K562 (cell line): ENCODE measurements at regions of chr12 and their contacts with region 1.

Region 1: DNA sequence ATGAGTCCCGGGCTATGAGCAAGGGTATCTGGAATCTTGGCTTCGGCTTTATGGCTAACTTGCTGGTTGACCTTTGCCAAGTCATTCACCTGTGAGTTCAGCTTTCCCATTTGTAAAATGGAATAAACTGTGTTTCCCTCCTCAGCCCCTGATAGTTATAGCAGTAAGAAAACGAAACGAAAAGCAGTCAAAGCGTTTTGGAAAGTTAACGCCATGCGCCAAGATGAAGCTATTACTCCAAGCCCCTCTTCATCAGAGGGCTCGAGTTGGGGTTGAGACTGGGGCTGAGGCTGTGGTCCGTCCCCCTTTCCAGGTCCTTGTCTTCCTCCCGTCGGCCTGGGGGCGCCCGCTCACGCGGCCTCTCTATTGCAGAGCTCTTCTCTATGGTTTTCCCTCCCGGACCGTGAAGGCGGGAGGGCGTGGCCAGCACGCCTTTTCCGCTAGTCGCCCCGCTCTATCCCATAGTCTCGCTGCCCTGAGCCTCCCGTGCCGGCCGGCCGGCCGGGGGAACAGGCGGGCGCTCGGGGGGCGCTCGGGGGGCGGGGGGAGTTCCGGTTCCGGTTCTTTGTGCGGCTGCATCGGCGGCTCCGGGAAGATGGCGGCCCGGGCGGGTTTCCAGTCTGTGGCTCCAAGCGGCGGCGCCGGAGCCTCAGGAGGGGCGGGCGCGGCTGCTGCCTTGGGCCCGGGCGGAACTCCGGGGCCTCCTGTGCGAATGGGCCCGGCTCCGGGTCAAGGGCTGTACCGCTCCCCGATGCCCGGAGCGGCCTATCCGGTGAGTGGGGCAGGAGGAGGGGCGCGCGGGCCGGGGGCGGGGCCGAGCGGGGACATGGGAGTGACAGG is at the start of gene SMARCD1:
- DNase-seq: peak; percentile 92 to 96 (median 93)
- ATAC-seq: peak; percentile 96
- H3K4me3 ChIP-seq: peak within 1 kb of the TSS; percentile 82
- H3K27ac ChIP-seq: peak within 1 kb of the TSS; percentile 84
- H3K4me1 ChIP-seq: peaks cover 10 to 21% of the 10 kb centered on the region in 2 experiments; a peak in 4 of 5 replicates
- H3K27me3 ChIP-seq: no peaks in the 10 kb centered on the region
- CTCF ChIP-seq: peak; percentile 75 to 88 (median 86)
- EP300 ChIP-seq: peak; percentile 39; the same call in 1 of the 2 replicates
- POLR2A ChIP-seq: peak; percentile 60; the same call in 1 of the 2 replicates
- RAD21 ChIP-seq: peak in 1 of 2 experiments; percentile 20; a peak in 1 of 4 replicates
- polyA plus RNA-seq, gene SMARCD1: 0.86 to 1.5 TPM

Region 2: GRCh38 chr12:50097952-50098351 is 13.0 kb after region 1 on chr12:
- CTCF ChIA-PET with region 1: no interaction called
- POLR2A ChIA-PET with region 1: interaction called, 16 read pairs
- in situ Hi-C with region 1: no loop called
- intact Hi-C with region 1: no loop called
- DNase-seq: no peak
- ATAC-seq: no peak
- H3K4me3 ChIP-seq: no peak overlapping the region
- H3K27ac ChIP-seq: no peak overlapping the region
- H3K4me1 ChIP-seq: no peaks in the 10 kb centered on the region; a peak in 1 of 5 replicates
- H3K27me3 ChIP-seq: no peaks in the 10 kb centered on the region
- CTCF ChIP-seq: no peak
- EP300 ChIP-seq: no peak
- POLR2A ChIP-seq: no peak
- RAD21 ChIP-seq: no peak

Region 3: DNA sequence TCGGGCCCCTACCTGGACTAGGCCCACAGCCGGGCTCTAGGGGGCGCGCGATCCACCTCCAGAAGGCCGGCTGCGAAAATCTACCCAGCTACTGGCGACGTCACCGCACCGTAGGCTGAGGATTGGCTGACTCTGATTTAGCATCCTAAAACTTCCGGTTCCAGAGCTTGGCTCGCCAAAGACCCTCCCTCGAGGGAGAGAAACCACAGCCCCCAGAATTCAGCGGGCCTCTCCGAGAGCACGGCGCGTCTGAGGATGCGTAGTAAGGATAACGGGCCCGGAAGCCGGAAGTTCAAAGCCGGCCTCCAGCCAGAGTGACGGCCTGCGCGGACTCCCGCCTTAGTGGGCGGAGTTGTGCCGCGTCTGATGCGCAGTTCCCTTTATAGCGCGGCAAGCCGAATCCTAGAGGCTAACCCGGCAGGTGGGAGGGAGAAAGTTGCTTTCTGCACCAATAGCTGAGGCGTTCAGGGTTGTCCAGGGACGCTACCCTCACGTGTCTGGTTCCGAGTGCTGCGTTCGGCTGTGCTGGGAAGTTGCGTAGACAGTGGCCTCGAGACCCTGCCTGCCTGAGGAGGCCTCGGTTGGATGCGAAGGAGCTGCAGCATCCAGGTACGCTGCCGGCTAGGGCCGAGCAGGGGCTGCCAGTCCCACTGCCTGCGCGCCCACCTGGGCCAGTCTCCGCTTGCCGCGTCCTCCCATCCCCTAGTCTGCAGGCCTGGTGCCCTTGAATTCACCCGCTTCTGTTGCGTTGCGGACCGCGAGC is 26.9 kb after region 1 on chr12 and contains the start of gene COX14:
- CTCF ChIA-PET with region 1: interaction called, 4 read pairs
- POLR2A ChIA-PET with region 1: interaction called, 6 read pairs
- in situ Hi-C with region 1: no loop called
- intact Hi-C with region 1: loop called (anchors 1 kb)
- DNase-seq: peak; percentile 93 to 99 (median 96)
- ATAC-seq: peak; percentile 92
- H3K4me3 ChIP-seq: peak within 1 kb of the TSS; percentile 78
- H3K27ac ChIP-seq: peak within 1 kb of the TSS; percentile 87
- H3K4me1 ChIP-seq: peaks cover 29 to 48% of the 10 kb centered on the region in 2 experiments
- H3K27me3 ChIP-seq: no peaks in the 10 kb centered on the region
- CTCF ChIP-seq: peak; percentile 90 to 96 (median 95)
- EP300 ChIP-seq: no peak
- POLR2A ChIP-seq: peak; percentile 90
- RAD21 ChIP-seq: peak in 1 of 2 experiments; percentile 52; a peak in 2 of 4 replicates
- polyA plus RNA-seq, gene COX14: 259 to 269 TPM

Region 4: GRCh38 chr12:50167041-50167828 is 82.2 kb after region 1 on chr12 and contains the start of gene CERS5:
- CTCF ChIA-PET with region 1: interaction called, 3 read pairs
- POLR2A ChIA-PET with region 1: interaction called, 11 read pairs
- in situ Hi-C with region 1: no loop called
- intact Hi-C with region 1: no loop called
- DNase-seq: peak; percentile 97 to 99 (median 98)
- ATAC-seq: peak; percentile 99
- H3K4me3 ChIP-seq: peak within 1 kb of the TSS; percentile 97
- H3K27ac ChIP-seq: peak within 1 kb of the TSS; percentile 84
- H3K4me1 ChIP-seq: peaks cover 3 to 28% of the 10 kb centered on the region in 2 experiments; a peak in 4 of 5 replicates
- H3K27me3 ChIP-seq: no peaks in the 10 kb centered on the region
- CTCF ChIP-seq: peak in 2 of 3 experiments; percentile 31 to 49; a peak in 3 of 6 replicates
- EP300 ChIP-seq: no peak
- POLR2A ChIP-seq: peak; percentile 82
- RAD21 ChIP-seq: no peak
- polyA plus RNA-seq, gene CERS5: 6.1 to 8.7 TPM

Region 5: DNA sequence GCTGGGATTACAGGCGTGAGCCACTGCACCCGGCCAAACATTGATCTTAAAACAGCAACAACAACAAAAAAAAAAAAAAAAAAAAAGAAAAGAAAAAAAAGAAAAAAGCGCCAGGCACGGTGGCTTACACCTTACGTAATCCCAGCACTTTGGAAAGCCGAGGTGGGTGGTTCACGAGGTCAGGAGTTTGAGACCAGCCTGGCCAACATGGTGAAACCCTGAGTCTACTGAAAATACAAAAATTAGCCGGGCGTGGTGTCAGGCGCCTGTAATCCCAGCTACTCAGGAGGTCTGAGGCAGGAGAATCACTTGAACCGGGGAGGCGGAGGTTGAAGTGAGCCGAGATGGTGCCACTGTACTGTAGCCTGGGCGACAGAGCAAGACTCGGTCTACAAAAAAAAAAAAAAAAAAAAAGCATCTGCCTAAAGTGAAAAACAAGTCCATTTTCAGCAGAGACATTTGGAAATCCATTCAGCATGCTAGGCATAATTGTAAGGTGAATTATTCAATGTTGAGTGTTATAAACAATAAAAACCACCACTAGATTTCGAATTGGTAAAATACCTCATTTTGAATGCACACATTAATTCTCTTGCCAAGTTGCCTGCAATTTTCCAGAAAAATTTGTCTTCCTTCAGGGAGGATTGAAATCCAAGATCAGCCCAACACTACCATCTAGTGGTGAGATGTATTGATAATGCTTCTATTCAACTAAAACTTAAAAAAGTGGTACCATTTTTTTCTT is 90.1 kb after region 1 on chr12:
- CTCF ChIA-PET with region 1: interaction called, 24 read pairs
- POLR2A ChIA-PET with region 1: interaction called, 5 read pairs
- in situ Hi-C with region 1: loop called (anchors 5 kb)
- intact Hi-C with region 1: loop called (anchors 1 kb)
- DNase-seq: peak; percentile 51 to 82 (median 54)
- ATAC-seq: peak; percentile 64
- H3K4me3 ChIP-seq: no peak overlapping the region
- H3K27ac ChIP-seq: no peak overlapping the region
- H3K4me1 ChIP-seq: no peaks in the 10 kb centered on the region
- H3K27me3 ChIP-seq: no peaks in the 10 kb centered on the region
- CTCF ChIP-seq: peak; percentile 52 to 87 (median 54); a peak in 5 of 6 replicates
- EP300 ChIP-seq: no peak
- POLR2A ChIP-seq: no peak
- RAD21 ChIP-seq: peak; percentile 92 to 94

Region 6: GRCh38 chr12:50257686-50258551 is 172.9 kb after region 1 on chr12:
- CTCF ChIA-PET with region 1: no interaction called
- POLR2A ChIA-PET with region 1: no interaction called
- in situ Hi-C with region 1: no loop called
- intact Hi-C with region 1: no loop called
- DNase-seq: no peak
- ATAC-seq: no peak
- H3K4me3 ChIP-seq: no peak overlapping the region
- H3K27ac ChIP-seq: 0 out of 3 replicates have a peak overlapping the region, but pooled peaks have one; percentile 17
- H3K4me1 ChIP-seq: peaks cover 23 to 25% of the 10 kb centered on the region in 2 experiments; a peak in 4 of 5 replicates
- H3K27me3 ChIP-seq: no peaks in the 10 kb centered on the region
- CTCF ChIP-seq: no peak
- EP300 ChIP-seq: no peak
- POLR2A ChIP-seq: no peak
- RAD21 ChIP-seq: no peak